ENCODE measurements at regions of chr17 and their contacts with region 1.

Region 1: DNA sequence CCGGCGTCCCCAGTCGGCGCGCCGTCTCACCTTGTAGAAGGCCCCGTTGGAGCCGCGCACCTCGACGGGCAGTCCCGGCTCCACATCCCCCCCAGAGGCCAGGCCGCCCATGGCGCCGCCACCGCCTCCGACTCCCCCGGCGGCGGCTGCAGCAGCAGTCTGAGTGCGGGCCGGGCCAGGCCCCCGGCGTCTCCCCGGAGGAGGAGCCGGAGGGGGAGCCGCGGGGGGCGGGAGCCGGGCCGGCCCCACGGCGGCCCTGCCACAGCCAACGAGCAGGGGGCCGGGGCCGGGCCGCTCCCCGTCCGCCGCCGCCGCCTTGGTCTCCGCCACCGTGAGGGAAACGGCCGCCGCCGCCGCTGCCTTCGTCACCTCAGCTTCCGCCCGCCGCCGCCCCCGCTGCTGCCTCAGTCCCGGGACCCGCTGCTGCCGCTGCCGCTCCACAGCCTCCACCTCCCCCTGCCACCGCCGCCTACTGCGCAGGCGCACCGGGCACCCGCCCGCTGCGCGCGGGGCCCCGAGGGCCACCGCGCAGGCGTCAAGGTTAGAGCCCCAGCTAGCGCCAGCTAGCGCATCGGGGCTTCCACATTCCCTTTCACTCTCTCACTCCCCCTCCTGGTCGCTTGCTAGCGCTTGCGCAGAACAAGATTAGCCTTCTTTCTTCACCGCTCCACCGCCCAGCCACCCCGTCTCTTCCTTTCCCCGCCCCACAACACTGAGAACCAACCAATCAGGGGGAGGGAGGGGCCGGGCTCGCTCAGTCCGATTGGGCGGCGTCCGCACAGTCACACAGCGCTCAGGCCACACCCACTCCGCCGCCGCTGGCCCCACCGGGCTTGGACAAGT is at the start of gene FXR2:
- H3K4me3 ChIP-seq: peak within 1 kb of the TSS; percentile 65
- H3K27ac ChIP-seq: peak within 1 kb of the TSS; percentile 97
- H3K4me1 ChIP-seq: peaks cover 22% of the 10 kb centered on the region
- CTCF ChIP-seq: peak; percentile 94

Region 2: DNA sequence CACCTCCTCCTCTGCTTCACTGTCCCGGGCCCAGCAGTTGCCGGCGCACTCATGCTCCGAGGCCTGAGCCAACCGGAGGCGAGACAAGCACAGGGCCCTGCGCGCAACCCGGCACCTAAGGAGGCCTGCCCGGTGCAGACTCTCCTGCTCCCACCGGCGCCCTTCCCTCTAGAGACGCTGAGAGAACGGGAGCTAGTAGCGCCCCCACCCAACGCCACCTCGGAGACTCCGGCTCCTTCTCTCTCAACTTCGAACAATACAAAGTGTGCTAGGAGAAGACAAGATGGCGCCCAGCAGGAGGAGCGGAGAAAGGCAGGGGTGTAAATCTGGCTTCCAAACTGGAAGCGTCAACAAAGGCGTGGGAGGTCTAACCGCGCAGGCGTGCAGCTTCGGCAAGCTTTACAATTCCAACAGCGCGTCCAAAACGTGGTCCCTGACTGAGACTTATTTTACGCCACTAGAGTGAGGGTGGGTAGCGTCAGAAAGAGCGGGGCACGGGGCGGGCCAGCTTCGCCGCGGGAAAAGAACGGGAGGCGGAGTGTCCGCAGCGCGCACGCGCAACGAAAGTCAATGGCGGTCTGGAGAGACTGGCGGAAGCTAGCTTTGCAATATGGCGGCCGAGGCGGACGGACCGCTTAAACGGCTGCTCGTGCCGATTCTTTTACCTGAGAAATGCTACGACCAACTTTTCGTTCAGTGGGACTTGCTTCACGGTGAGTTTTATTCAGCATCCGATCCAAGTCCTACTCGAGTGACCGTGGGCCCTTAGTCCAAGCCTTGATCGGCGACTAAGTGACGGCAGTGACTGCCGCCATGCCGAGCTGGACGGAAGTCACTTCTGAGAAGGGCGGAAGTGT is 31.2 kb before region 1 on chr17 and contains the start of gene MPDU1:
- CTCF ChIA-PET with region 1: interaction called, 5 read pairs
- POLR2A ChIA-PET with region 1: interaction called, 31 read pairs
- H3K4me3 ChIP-seq: peak within 1 kb of the TSS; percentile 86
- H3K27ac ChIP-seq: peak within 1 kb of the TSS; percentile 95
- H3K4me1 ChIP-seq: peaks cover 8% of the 10 kb centered on the region; the same call in 1 of the 2 replicates
- CTCF ChIP-seq: peak; percentile 52

Region 3: DNA sequence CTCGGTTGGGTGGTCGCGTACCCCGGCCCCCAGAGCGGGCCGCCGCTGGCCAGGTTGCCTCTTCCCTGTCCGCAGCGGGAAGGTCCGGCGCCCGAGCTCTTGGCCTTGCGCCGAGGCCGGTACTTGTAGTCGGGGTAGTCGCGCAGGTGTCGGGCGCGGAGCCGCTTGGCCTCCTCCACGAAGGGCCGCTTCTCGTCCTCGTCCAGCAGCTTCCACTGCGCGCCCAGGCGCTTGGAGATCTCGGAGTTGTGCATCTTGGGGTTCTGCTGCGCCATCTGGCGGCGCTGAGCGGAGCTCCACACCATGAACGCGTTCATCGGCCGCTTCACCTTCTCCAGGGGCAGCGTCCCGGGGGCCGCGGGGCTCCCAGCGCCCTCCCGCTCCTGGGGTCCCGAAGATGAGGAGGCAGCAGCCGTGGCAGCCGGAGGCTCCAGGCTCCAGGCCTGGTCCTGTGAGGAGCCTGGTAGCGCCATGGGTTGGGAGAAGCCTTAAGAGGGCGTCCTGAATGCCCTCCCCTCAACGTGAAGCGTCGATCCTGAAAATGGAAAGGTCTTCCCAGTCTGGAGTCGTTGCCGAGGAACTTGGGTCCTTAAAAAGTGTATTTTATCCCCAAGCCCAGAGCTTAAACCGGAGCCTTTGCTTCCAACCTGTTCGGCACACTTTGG is 25.3 kb before region 1 on chr17:
- CTCF ChIA-PET with region 1: interaction called, 5 read pairs
- POLR2A ChIA-PET with region 1: interaction called, 31 read pairs
- H3K4me3 ChIP-seq: no peak overlapping the region
- H3K27ac ChIP-seq: no peak overlapping the region
- H3K4me1 ChIP-seq: no peaks in the 10 kb centered on the region; the same call in 1 of the 2 replicates
- CTCF ChIP-seq: no peak; the same call in 1 of the 2 replicates

Region 4: DNA sequence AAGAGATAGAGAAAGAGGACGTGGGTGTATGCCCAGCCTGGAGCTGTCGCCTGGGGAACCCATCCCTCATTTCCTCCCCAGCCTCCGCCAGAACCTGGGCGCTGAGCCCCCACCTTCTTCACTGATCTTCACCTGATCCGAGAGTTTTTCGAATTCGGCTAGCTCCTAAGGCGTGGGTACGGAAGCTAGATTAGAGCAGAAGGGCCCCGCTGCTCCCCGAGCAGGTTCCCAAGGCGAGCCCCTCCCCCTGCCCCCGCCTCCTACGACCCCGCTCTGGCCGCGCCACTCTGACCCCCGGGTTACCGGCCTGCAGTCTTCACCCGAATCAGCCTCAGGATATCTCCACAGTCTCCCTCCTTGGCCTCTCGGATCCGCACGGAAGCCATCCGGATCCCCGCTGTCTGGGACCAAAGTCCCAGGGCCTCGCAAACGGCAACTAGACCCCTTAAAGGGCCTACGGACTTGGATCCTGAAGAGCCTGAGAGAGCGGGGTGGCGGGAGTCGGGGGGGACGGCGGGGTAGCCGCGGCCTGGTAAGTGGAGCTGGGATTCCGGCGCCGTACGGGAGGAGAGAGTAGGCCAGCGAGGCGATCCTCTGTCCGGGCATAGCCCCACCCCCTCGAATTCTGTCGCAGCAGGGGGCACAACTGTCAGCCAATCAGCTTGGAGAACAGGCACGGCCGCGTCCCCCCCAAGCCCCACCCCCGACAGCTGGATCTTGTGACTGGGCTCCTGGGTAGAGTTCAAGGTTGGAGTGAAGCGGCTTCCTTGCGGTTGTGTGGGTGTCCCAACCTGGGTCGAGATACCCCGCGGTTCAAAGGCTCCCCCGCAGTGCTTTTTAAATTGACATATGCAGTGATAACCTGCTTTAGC is 12.8 kb after region 1 on chr17 and contains the start of gene SAT2:
- CTCF ChIA-PET with region 1: interaction called, 30 read pairs
- POLR2A ChIA-PET with region 1: interaction called, 52 read pairs
- H3K4me3 ChIP-seq: peak within 1 kb of the TSS; percentile 84
- H3K27ac ChIP-seq: peak within 1 kb of the TSS; percentile 91
- H3K4me1 ChIP-seq: peaks cover 3% of the 10 kb centered on the region; the same call in 1 of the 2 replicates
- CTCF ChIP-seq: no peak

Region 5: GRCh38 chr17:7632492-7632894 is 17.9 kb after region 1 on chr17:
- CTCF ChIA-PET with region 1: interaction called, 30 read pairs
- POLR2A ChIA-PET with region 1: interaction called, 52 read pairs
- H3K4me3 ChIP-seq: no peak overlapping the region
- H3K27ac ChIP-seq: peak overlapping the region; percentile 20; the same call in 1 of the 2 replicates
- H3K4me1 ChIP-seq: no peaks in the 10 kb centered on the region
- CTCF ChIP-seq: peak; percentile 91

Region 6: GRCh38 chr17:7650509-7651096 is 36.0 kb after region 1 on chr17 and contains the start of gene ATP1B2:
- CTCF ChIA-PET with region 1: interaction called, 4 read pairs
- POLR2A ChIA-PET with region 1: interaction called, 14 read pairs
- H3K4me3 ChIP-seq: peak within 1 kb of the TSS; percentile 38
- H3K27ac ChIP-seq: peak within 1 kb of the TSS; percentile 39; the same call in 1 of the 2 replicates
- H3K4me1 ChIP-seq: peaks cover 5% of the 10 kb centered on the region
- CTCF ChIP-seq: no peak